ENCODE measurements at regions of chr9 and their contacts with region 1.

Region 1: GRCh38 chr9:128339771-128340690 is at the start of gene SLC27A4:
- DNase-seq: peak; percentile 90
- CTCF ChIP-seq: no peak

Region 2: GRCh38 chr9:128370826-128371621 is 31.0 kb after region 1 on chr9 and contains the start of gene URM1:
- CTCF ChIA-PET with region 1: interaction called, 11 read pairs
- POLR2A ChIA-PET with region 1: interaction called, 3 read pairs
- DNase-seq: peak; percentile 96
- CTCF ChIP-seq: no peak

Region 3: GRCh38 chr9:128568470-128569078 is 228.5 kb after region 1 on chr9:
- CTCF ChIA-PET with region 1: no interaction called
- POLR2A ChIA-PET with region 1: no interaction called
- DNase-seq: no peak
- CTCF ChIP-seq: no peak

Measured in GM10248 (cell line).